Aorta (tissue), 5 donors: ENCODE measurements at regions of chr6 and their contacts with region 1.

Region 1: GRCh38 chr6:138987640-138988468 is at the start of gene REPS1:
- DNase-seq: peak; percentile 95 to 97
- ATAC-seq: peak; percentile 97
- H3K4me3 ChIP-seq: peak within 1 kb of the TSS; percentile 84 to 89
- H3K27ac ChIP-seq: peak within 1 kb of the TSS; percentile 28 to 60
- H3K4me1 ChIP-seq: peaks cover 3 to 8% of the 10 kb centered on the region in 2 donors
- H3K27me3 ChIP-seq: no peaks in the 10 kb centered on the region
- total RNA-seq, gene REPS1: 33.2 to 40.8 TPM

Region 2: DNA sequence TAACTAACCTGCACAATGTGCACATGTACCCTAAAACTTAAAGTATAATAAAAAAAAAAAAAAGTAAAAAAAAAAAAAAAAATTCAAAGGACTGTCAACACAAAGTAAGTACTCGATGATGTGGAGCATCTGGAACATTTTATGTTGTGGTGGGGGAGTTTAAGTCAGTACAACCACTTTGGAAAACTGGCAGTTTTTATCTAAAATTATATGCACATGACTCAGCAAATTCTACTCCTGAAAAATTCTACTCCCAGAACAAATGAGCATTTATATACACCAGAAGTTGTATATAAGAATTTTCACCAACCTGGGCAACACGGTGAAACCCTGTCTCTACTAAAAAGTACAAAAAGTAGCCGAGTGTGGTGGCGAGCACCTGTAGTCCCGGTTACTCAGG is 251.2 kb before region 1 on chr6:
- intact Hi-C with region 1: no loop called
- DNase-seq: no peak
- ATAC-seq: no peak
- H3K4me3 ChIP-seq: no peak overlapping the region
- H3K27ac ChIP-seq: no peak overlapping the region
- H3K4me1 ChIP-seq: no peaks in the 10 kb centered on the region
- H3K27me3 ChIP-seq: no peaks in the 10 kb centered on the region

Region 3: DNA sequence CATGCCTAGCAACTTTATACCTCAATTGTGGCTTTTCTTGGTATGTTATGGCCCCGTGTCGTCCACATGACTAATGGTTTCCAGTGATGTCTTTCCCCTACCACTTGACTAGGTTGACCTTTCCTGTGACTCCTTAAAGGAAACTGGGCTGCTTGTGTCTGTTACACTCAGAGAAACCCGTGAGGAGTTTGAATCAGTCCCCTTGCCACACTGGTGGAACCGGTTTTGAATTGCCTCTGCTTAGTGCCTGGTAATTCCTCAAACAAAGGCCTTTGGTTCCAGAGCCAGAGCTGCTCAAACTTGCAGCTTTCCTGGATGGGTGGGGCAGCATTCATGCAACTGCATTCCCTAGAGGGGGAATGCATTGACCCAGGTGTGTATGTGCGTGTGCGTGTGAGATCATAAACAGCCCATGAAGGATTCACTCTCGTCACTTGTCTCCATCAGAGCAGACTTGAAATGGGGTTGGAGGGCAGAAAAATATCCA is 170.0 kb before region 1 on chr6:
- intact Hi-C with region 1: loop called (anchors 2 to 5 kb)
- DNase-seq: no peak
- ATAC-seq: no peak
- H3K4me3 ChIP-seq: no peak overlapping the region
- H3K27ac ChIP-seq: no peak overlapping the region
- H3K4me1 ChIP-seq: no peaks in the 10 kb centered on the region
- H3K27me3 ChIP-seq: no peaks in the 10 kb centered on the region

Region 4: GRCh38 chr6:139364302-139364981 is 376.6 kb after region 1 on chr6:
- intact Hi-C with region 1: loop called (anchors 10 kb)
- DNase-seq: no peak
- ATAC-seq: peak; percentile 69
- H3K4me3 ChIP-seq: no peak overlapping the region
- H3K27ac ChIP-seq: no peak overlapping the region
- H3K4me1 ChIP-seq: peaks cover 0 to 3% of the 10 kb centered on the region in 2 donors
- H3K27me3 ChIP-seq: no peaks in the 10 kb centered on the region